ENCODE measurements at regions of chrX and their contacts with region 1.

Region 1: GRCh38 chrX:136519070-136519469 is 12.9 kb upstream of the VGLL1 start:
- DNase-seq: no peak
- ATAC-seq: no peak
- H3K4me3 ChIP-seq: no peak overlapping the region
- H3K27ac ChIP-seq: no peak overlapping the region
- H3K4me1 ChIP-seq: no peaks in the 10 kb centered on the region
- H3K27me3 ChIP-seq: peaks cover 0 to 5% (median 0%) of the 10 kb centered on the region in 3 donors
- CTCF ChIP-seq: no peak

Region 2: DNA sequence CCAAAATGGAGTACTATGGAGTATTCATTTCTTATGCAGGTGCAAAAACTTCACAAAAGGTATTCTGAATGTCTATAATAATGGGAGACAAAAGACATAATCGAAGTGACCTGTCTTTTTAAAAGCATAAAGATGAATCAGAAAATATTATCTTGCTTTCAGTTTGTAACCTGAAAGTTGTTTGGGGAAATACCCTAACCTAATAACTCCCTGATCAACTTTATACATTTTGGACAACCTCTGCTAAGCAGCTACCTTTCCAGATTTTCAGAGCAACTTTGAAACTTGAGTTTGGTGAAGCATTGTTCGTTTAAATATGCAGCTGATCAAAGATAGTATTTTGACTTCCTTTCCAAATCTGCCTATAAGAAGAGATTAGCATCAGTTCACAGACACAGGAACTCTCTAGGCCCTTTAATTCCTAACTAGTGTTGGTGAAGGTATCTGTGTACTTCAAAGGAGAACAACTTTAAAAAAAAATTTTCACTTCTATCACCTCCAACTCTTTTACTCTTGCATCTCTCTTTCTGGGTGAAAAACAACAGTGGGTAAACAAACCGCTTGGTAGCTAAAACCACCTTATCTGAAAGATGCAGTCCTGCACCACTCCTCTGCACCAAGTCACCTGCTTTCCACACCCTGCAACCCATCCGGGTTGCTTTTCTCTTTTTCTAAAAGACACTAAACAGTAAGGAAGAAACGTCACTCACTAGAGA is 155.4 kb after region 1 on chrX:
- intact Hi-C with region 1: loop called in 1 of 2 experiments (anchors 10 kb)
- DNase-seq: no peak
- ATAC-seq: no peak
- H3K4me3 ChIP-seq: no peak overlapping the region
- H3K27ac ChIP-seq: no peak overlapping the region
- H3K4me1 ChIP-seq: no peaks in the 10 kb centered on the region
- H3K27me3 ChIP-seq: no peaks in the 10 kb centered on the region
- CTCF ChIP-seq: no peak

Measured in psoas muscle (tissue), 8 donors.